ENCODE measurements at regions of chr10 and their contacts with region 1.

Region 1: GRCh38 chr10:110311357-110311949 is 6.7 kb upstream of the SMNDC1 start:
- DNase-seq: peak in 6 of 9 donors; percentile 19 to 44 (median 28)
- ATAC-seq: peak; percentile 81
- H3K4me3 ChIP-seq: no peak overlapping the region
- H3K4me3 Mint-ChIP-seq: no peak overlapping the region
- H3K27ac ChIP-seq: no peak overlapping the region
- H3K27ac Mint-ChIP-seq: no peak overlapping the region
- H3K4me1 ChIP-seq: peaks cover 0 to 4% of the 10 kb centered on the region in 2 donors
- H3K4me1 Mint-ChIP-seq: peaks cover 0 to 27% (median under 1%) of the 10 kb centered on the region in 7 donors
- H3K27me3 ChIP-seq: no peaks in the 10 kb centered on the region
- H3K27me3 Mint-ChIP-seq: peaks cover 0 to 4% (median 0%) of the 10 kb centered on the region in 5 donors

Region 2: GRCh38 chr10:110225756-110226542 is 85.5 kb before region 1 on chr10:
- CTCF ChIA-PET with region 1: no interaction called
- POLR2A ChIA-PET with region 1: no interaction called
- intact Hi-C with region 1: no loop called
- DNase-seq: peak; percentile 83 to 91 (median 88)
- ATAC-seq: peak; percentile 73
- H3K4me3 ChIP-seq: peak overlapping the region; percentile 75
- H3K4me3 Mint-ChIP-seq: peak overlapping the region; percentile 87 to 99 (median 94)
- H3K27ac ChIP-seq: peak overlapping the region; percentile 92
- H3K27ac Mint-ChIP-seq: peak overlapping the region; percentile 78 to 97 (median 96)
- H3K4me1 ChIP-seq: peaks cover 16 to 27% of the 10 kb centered on the region in 2 donors
- H3K4me1 Mint-ChIP-seq: peaks cover 27 to 68% (median 49%) of the 10 kb centered on the region in 7 donors
- H3K27me3 ChIP-seq: no peaks in the 10 kb centered on the region
- H3K27me3 Mint-ChIP-seq: no peaks in the 10 kb centered on the region

Region 3: DNA sequence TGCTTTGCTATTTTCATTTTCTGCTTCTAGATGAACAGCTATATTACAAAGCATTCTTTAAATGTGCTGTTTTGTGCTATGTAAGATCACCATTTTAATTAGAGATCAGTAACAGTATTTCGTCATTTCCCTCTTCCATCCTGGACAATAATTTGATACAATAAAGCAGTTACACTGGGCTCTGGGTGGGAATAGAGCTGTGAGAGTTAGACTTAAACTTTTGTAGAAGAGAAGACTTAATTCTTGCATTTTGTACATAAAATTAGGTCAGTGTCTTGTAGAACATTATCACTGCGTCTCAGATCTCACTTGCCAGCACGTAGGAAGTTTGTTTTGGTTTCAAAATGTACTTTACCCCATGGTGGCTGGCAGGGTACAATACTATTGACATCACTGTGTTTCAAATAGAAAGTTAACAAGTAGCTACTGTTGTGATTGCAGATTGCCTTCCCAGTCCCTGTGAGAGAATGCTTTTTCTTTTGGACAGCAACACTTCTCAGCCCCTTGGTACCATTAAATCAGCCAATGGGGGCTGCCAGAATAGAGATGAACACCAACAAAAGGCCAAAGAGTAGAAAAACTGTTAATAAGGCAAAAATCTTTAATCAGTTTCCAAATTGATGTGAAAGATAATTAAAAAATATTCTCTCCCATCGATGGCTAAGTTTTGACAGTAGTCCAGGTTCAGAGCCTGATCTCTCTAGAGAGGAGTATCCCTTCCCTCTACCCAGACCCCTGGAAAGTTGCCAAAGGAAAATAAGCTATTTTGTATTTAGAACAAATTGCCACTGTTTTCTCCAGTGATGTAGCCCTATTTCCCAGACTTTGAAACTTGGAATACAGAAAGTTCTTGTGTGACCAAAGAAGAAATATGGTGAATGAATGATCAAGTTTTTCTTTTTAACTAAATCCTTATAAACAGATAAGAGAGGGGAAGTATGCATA is 41.8 kb before region 1 on chr10:
- CTCF ChIA-PET with region 1: no interaction called
- POLR2A ChIA-PET with region 1: no interaction called
- intact Hi-C with region 1: no loop called
- DNase-seq: peak in 7 of 9 donors; percentile 9 to 52 (median 45)
- ATAC-seq: peak; percentile 81
- H3K4me3 ChIP-seq: peak overlapping the region; percentile 49
- H3K4me3 Mint-ChIP-seq: peak overlapping the region; percentile 39 to 91 (median 76)
- H3K27ac ChIP-seq: peak overlapping the region; percentile 50
- H3K27ac Mint-ChIP-seq: peak overlapping the region; percentile 57 to 93 (median 83)
- H3K4me1 ChIP-seq: peaks cover 0 to 19% of the 10 kb centered on the region in 2 donors
- H3K4me1 Mint-ChIP-seq: peaks cover 26 to 80% (median 53%) of the 10 kb centered on the region in 7 donors
- H3K27me3 ChIP-seq: no peaks in the 10 kb centered on the region
- H3K27me3 Mint-ChIP-seq: peaks cover 0 to 34% (median 0%) of the 10 kb centered on the region in 5 donors

Region 4: DNA sequence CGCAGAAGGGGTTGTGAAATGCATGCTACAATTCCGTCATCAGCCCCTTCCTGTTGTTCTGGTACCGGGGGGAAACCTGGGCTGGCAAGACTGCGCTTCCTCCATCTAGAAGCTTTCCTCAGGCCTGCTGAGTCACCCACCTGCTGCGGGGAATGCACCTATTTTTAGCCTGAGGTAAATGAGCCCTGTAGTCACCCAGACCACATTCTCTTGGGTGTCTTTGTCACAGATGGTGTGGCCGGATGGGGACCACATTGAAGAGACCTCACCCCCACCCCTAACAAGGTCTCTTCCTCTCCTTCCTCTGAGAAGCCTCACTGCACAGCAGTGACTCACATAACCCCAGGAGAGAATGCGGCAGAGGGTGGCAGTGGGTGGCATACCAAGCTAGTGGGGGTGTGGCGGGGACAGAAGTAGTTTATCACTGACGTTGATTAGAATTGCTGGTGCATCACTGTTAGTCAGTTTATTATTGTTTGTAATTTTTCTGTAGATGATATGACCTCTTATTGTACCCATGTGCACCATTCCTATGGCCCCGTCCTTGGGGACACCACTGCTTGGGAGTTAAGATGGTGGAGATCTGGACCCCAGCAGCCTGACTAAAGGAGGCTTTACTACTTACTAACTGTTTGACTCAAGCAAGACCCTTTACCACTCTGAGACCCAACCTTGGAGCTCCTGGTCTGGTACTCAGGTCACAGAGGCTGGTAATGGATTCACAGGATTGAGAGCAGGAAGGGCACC is 103.3 kb after region 1 on chr10:
- CTCF ChIA-PET with region 1: no interaction called
- POLR2A ChIA-PET with region 1: no interaction called
- intact Hi-C with region 1: loop called (anchors 1 kb)
- DNase-seq: peak; percentile 42 to 84 (median 69)
- ATAC-seq: peak; percentile 96
- H3K4me3 ChIP-seq: no peak overlapping the region
- H3K4me3 Mint-ChIP-seq: peak overlapping the region in 9 of 10 donors; percentile 13 to 71 (median 40)
- H3K27ac ChIP-seq: no peak overlapping the region
- H3K27ac Mint-ChIP-seq: peak overlapping the region; percentile 20 to 88 (median 74)
- H3K4me1 ChIP-seq: peaks cover 14 to 35% of the 10 kb centered on the region in 2 donors
- H3K4me1 Mint-ChIP-seq: peaks cover 19 to 64% (median 26%) of the 10 kb centered on the region in 7 donors
- H3K27me3 ChIP-seq: no peaks in the 10 kb centered on the region
- H3K27me3 Mint-ChIP-seq: peaks cover 0 to 5% (median 0%) of the 10 kb centered on the region in 5 donors

Region 5: DNA sequence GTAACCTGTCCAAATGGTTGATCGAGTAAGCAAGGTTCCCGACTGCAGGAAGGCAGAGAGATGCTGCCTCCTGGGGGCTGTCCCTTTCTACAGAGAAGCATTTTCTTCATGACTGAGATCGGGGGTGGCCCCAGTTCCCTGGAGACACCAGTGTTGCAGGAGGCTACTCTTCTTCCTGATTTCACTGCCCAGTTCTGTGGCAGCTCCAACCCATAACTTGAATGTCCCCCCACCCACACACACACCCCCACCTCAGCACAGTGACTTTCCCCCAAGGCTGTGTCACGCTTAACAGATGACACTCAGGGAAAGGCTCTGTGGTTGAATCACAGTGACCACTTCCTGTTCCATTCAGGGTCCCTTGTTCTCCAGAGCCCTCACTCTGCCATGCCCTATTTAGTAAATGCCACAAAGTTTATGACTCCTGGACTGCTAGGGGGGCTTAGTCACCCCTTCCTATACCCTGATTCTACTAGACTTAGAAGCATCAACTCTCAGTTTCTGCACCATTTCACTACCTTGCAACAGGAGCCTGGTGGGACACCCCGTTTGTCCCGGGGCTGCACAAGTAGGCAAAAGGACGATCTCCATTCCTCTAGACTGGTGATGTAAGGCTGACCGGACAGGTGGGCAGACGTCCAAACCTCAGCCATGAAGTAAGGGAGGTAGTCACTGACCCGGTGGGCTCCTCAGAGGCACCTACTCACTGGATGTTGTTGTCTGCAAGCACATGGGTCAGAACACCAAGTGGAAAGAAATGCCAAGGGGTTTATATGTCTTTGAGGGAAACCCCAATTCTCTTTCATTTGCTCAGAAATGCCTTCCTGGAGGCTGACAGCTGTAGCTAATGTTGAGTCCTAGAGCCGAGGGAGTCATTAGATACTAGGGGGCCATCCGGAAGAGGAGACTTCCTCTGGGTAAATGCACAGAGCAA is 224.8 kb after region 1 on chr10:
- CTCF ChIA-PET with region 1: interaction called, 3 read pairs
- POLR2A ChIA-PET with region 1: interaction called, 3 read pairs
- intact Hi-C with region 1: loop called (anchors 1 to 2 kb)
- DNase-seq: peak in 6 of 9 donors; percentile 10 to 70 (median 21)
- ATAC-seq: peak; percentile 94
- H3K4me3 ChIP-seq: no peak overlapping the region
- H3K4me3 Mint-ChIP-seq: peak overlapping the region in 2 of 10 donors; percentile 71 to 73
- H3K27ac ChIP-seq: no peak overlapping the region
- H3K27ac Mint-ChIP-seq: peak overlapping the region in 2 of 9 donors; percentile 48 to 74
- H3K4me1 ChIP-seq: peaks cover 7 to 9% of the 10 kb centered on the region in 2 donors
- H3K4me1 Mint-ChIP-seq: peaks cover 15 to 50% (median 17%) of the 10 kb centered on the region in 7 donors
- H3K27me3 ChIP-seq: no peaks in the 10 kb centered on the region
- H3K27me3 Mint-ChIP-seq: peaks cover 0 to 8% (median 0%) of the 10 kb centered on the region in 5 donors

Region 6: GRCh38 chr10:110600487-110601101 is 289.1 kb after region 1 on chr10:
- CTCF ChIA-PET with region 1: interaction called, 5 read pairs
- POLR2A ChIA-PET with region 1: no interaction called
- intact Hi-C with region 1: loop called (anchors 1 kb)
- DNase-seq: peak in 6 of 9 donors; percentile 19 to 39 (median 29)
- ATAC-seq: peak; percentile 70
- H3K4me3 ChIP-seq: no peak overlapping the region
- H3K4me3 Mint-ChIP-seq: no peak overlapping the region
- H3K27ac ChIP-seq: no peak overlapping the region
- H3K27ac Mint-ChIP-seq: no peak overlapping the region
- H3K4me1 ChIP-seq: no peaks in the 10 kb centered on the region
- H3K4me1 Mint-ChIP-seq: peaks cover 0 to 6% (median 0%) of the 10 kb centered on the region in 7 donors
- H3K27me3 ChIP-seq: no peaks in the 10 kb centered on the region
- H3K27me3 Mint-ChIP-seq: no peaks in the 10 kb centered on the region

Region 7: DNA sequence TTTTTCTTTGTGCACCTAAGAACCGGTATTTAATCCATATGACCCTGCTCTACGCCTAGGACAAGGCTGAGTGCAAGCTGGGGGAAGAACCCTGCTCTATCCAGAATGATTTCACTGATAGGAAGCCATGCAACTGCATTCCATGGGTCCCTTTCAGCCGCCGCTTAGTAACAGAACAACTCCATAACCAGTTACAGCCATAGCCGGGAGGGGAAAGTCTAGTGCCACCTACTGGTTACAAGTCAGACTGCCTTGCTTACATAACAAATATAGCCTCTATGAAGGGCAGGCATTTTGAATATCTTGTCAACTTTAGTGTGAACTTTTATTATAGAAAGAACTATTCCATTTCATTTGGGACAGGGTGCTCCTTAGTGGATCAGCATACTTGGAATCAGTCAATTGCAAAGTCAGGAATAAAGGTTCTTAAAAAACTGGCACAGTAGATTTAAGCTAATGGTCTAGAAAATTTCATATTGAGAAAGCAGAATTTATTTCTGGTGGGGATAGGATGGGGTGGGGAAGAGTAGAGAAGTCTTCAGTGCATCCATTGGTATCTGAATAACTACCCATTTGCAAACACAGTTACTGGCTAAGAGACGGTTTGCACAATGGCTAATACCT is 1287.1 kb after region 1 on chr10:
- CTCF ChIA-PET with region 1: no interaction called
- POLR2A ChIA-PET with region 1: no interaction called
- intact Hi-C with region 1: loop called in 1 of 2 experiments (anchors 5 kb)
- DNase-seq: peak in 8 of 9 donors; percentile 1 to 47 (median 30)
- ATAC-seq: peak; percentile 62
- H3K4me3 ChIP-seq: no peak overlapping the region
- H3K4me3 Mint-ChIP-seq: no peak overlapping the region
- H3K27ac ChIP-seq: no peak overlapping the region
- H3K27ac Mint-ChIP-seq: no peak overlapping the region
- H3K4me1 ChIP-seq: no peaks in the 10 kb centered on the region
- H3K4me1 Mint-ChIP-seq: no peaks in the 10 kb centered on the region
- H3K27me3 ChIP-seq: no peaks in the 10 kb centered on the region
- H3K27me3 Mint-ChIP-seq: peaks cover 0 to 21% (median 12%) of the 10 kb centered on the region in 5 donors

Measured in naive thymus-derived CD4-positive, alpha-beta T cell (primary cell).